ENCODE measurements at regions of chr9 and their contacts with region 1.

Region 1: GRCh38 chr9:89878687-89879086 is 273.9 kb downstream of the GADD45G start:
- DNase-seq: peak; percentile 90
- H3K4me3 ChIP-seq: no peak overlapping the region
- H3K27ac ChIP-seq: peak overlapping the region; percentile 42 to 48
- H3K4me1 ChIP-seq: peaks cover 43% of the 10 kb centered on the region
- H3K27me3 ChIP-seq: no peaks in the 10 kb centered on the region
- CTCF ChIP-seq: no peak
- POLR2A ChIP-seq: no peak

Region 2: GRCh38 chr9:89935801-89936200 is 57.1 kb after region 1 on chr9:
- intact Hi-C with region 1: loop called (anchors 5 kb)
- DNase-seq: no peak
- H3K4me3 ChIP-seq: no peak overlapping the region
- H3K27ac ChIP-seq: no peak overlapping the region
- H3K4me1 ChIP-seq: no peaks in the 10 kb centered on the region
- H3K27me3 ChIP-seq: no peaks in the 10 kb centered on the region
- CTCF ChIP-seq: no peak
- POLR2A ChIP-seq: no peak

Region 3: DNA sequence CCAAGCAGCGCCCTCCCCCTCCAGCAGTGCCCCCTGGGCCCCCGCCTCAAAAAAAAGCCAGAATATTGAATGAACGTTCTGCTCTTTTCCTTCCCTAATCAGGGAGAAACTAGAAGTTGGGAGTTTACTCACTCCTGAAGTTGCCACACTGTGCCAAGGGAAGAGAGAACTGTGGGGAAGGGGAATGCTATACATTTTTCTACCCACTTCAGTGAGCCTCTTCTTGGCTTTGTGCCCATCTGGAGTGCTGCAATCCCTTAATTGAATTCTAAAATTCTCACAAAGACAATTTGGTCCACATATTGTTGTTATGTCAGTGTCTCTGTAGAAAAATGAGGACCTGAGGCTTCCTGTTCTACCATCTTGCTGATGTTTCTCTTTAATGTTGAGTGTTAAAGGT is 320.3 kb after region 1 on chr9:
- intact Hi-C with region 1: no loop called
- DNase-seq: no peak
- H3K4me3 ChIP-seq: no peak overlapping the region
- H3K27ac ChIP-seq: no peak overlapping the region
- H3K4me1 ChIP-seq: no peaks in the 10 kb centered on the region
- H3K27me3 ChIP-seq: no peaks in the 10 kb centered on the region
- CTCF ChIP-seq: no peak
- POLR2A ChIP-seq: no peak

Measured in prostate gland (tissue), 2 donors.